Common myeloid progenitor, CD34-positive (primary cell): ENCODE measurements at regions of chr1 and their contacts with region 1.

Region 1: GRCh38 chr1:24688621-24689195 is 45.6 kb downstream of the SRRM1 start:
- DNase-seq: peak; percentile 53 to 58 (median 54)
- H3K4me3 ChIP-seq: no peak overlapping the region
- H3K27ac ChIP-seq: no peak overlapping the region
- H3K4me1 ChIP-seq: peaks cover 0 to 2% (median under 1%) of the 10 kb centered on the region in 4 experiments
- H3K27me3 ChIP-seq: no peaks in the 10 kb centered on the region

Region 2: GRCh38 chr1:24673336-24673735 is 15.4 kb before region 1 on chr1:
- CTCF ChIA-PET with region 1: interaction called, 12 read pairs
- POLR2A ChIA-PET with region 1: no interaction called
- DNase-seq: no peak
- H3K4me3 ChIP-seq: no peak overlapping the region
- H3K27ac ChIP-seq: no peak overlapping the region
- H3K4me1 ChIP-seq: no peaks in the 10 kb centered on the region
- H3K27me3 ChIP-seq: no peaks in the 10 kb centered on the region

Region 3: GRCh38 chr1:24699628-24700027 is 10.9 kb after region 1 on chr1:
- CTCF ChIA-PET with region 1: interaction called, 21 read pairs
- POLR2A ChIA-PET with region 1: interaction called, 3 read pairs
- DNase-seq: no peak
- H3K4me3 ChIP-seq: no peak overlapping the region
- H3K27ac ChIP-seq: no peak overlapping the region
- H3K4me1 ChIP-seq: peaks cover 2 to 22% (median 15%) of the 10 kb centered on the region in 4 experiments
- H3K27me3 ChIP-seq: no peaks in the 10 kb centered on the region

Region 4: DNA sequence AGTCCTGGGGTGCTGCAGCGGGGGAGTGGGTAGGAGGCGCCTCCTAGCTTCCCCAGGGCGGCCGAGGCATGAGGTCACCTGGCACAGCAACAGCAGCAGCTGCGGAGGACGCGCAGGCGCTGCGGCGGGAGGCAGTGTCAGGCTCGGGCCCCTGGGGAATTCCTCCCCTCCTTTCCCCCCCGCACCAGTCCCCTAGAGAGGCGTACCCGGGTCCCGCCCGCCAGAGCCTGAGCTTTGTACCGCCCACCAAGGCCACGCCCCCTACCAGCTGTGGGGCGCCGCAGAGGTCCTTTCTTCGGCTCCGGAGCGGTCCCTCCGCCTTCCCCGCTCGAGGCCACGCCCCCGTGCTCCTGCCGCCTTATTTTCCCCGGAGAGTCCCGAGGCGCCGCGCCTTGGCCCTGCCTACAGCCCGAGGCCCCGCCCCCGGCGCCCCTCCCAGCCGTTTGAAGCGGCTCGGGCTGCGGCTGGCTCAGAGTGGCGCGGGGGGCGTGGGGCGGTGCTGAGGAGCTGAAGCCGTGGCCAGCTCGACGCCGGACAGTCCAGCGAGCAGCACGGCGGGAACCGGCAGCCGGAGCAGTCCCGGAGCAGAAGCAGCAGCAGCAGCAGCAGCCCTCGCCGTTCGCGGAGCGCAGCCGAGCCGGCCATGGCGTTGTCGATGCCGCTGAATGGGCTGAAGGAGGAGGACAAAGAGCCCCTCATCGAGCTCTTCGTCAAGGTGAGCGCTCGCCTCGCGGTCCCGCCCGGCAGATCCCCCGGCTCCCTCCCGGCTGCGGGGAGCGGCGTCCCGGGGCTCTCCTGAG is 56.4 kb after region 1 on chr1 and contains the start of gene CLIC4:
- CTCF ChIA-PET with region 1: interaction called, 10 read pairs
- POLR2A ChIA-PET with region 1: no interaction called
- DNase-seq: peak; percentile 99
- H3K4me3 ChIP-seq: peak within 1 kb of the TSS; percentile 77 to 96 (median 90)
- H3K27ac ChIP-seq: peak within 1 kb of the TSS; percentile 46 to 86
- H3K4me1 ChIP-seq: peaks cover 10 to 50% (median 26%) of the 10 kb centered on the region in 4 experiments
- H3K27me3 ChIP-seq: no peaks in the 10 kb centered on the region

Region 5: GRCh38 chr1:24822887-24823286 is 134.2 kb after region 1 on chr1:
- CTCF ChIA-PET with region 1: interaction called, 189 read pairs
- POLR2A ChIA-PET with region 1: interaction called, 4 read pairs
- DNase-seq: no peak
- H3K4me3 ChIP-seq: no peak overlapping the region
- H3K27ac ChIP-seq: no peak overlapping the region
- H3K4me1 ChIP-seq: peaks cover 0 to 7% (median 2%) of the 10 kb centered on the region in 4 experiments
- H3K27me3 ChIP-seq: no peaks in the 10 kb centered on the region

Region 6: DNA sequence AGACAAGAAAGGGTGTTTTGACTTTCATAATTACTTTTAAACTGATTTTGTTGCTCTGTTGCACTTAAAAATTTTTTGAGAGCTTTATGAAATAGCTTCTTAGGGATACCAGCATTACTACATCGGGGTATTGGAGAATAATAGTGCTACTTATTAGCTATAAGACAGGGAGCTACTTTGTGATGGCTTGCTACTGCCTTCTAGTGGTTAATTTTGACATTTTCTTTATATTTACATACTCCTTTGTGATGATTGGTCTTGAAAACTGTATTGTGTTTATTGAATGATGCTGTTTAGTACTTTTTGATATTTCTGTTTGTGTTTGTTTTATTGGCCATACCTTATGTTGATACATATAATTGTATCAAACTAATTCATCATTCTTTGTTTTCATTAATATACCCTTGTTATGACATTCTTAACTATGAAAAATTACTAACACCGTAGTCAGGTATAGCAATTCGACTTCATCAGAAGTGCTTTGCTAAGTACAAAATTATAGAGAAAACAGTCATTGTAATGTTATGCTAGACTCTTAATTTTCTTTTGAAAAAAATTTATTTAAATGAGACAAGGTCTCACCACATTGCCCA is 142.1 kb after region 1 on chr1:
- CTCF ChIA-PET with region 1: interaction called, 189 read pairs
- POLR2A ChIA-PET with region 1: interaction called, 4 read pairs
- DNase-seq: peak; percentile 70 to 85 (median 80)
- H3K4me3 ChIP-seq: no peak overlapping the region
- H3K27ac ChIP-seq: no peak overlapping the region
- H3K4me1 ChIP-seq: peaks cover 0 to 5% (median 3%) of the 10 kb centered on the region in 4 experiments
- H3K27me3 ChIP-seq: no peaks in the 10 kb centered on the region